Body of pancreas (tissue), 4 donors: ENCODE measurements at regions of chr3 and their contacts with region 1.

Region 1: GRCh38 chr3:149969940-149970715 is 567 bp downstream of the PFN2 start:
- DNase-seq: peak; percentile 85 to 88 (median 86)
- ATAC-seq: peak; percentile 77
- H3K4me3 ChIP-seq: peak overlapping the region; percentile 45 to 51
- H3K27ac ChIP-seq: peak overlapping the region; percentile 59 to 85 (median 79)
- H3K4me1 ChIP-seq: peaks cover 28% of the 10 kb centered on the region
- H3K27me3 ChIP-seq: no peaks in the 10 kb centered on the region
- CTCF ChIP-seq: no peak
- POLR2A ChIP-seq: peak in 2 of 3 donors; percentile 12 to 30

Region 2: DNA sequence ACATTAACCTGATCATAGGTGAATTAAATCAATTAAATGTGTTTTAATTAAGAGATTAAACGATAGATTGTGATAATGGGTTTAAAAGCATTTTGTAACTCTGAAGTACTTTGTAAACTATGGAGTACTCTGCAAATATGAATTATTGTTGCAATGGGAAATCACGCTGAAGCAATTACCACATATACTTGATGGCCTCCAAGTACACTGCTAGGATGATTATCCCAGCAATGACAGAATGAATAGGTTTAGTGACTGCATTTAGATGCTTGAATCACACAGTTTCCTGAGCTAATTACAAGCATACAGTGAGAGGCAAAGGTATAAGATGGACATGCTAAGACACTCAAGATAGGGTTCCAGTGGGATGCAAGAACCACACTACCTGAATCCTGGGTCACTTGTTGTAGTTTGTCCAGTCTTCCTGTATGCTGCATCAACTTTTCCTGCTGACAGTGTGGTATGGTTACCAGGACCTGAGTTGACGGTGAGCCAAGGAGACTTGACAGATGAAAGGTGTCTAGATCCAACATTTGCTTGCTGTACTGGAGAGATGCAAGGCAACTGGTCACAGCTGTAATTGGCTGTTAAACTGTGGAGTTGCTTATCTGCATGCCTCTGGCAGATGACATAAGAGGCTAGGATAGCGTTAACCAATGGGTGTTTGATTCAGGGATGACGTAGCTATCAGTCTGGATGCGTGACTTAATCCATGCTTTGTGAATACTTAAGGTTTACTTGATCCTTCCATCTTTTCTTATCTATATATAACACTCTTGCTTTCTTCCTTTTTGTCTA is 119.1 kb before region 1 on chr3:
- intact Hi-C with region 1: no loop called
- DNase-seq: no peak
- ATAC-seq: no peak
- H3K4me3 ChIP-seq: no peak overlapping the region
- H3K27ac ChIP-seq: no peak overlapping the region
- H3K4me1 ChIP-seq: peaks cover 6% of the 10 kb centered on the region
- H3K27me3 ChIP-seq: no peaks in the 10 kb centered on the region
- CTCF ChIP-seq: no peak
- POLR2A ChIP-seq: no peak

Region 3: DNA sequence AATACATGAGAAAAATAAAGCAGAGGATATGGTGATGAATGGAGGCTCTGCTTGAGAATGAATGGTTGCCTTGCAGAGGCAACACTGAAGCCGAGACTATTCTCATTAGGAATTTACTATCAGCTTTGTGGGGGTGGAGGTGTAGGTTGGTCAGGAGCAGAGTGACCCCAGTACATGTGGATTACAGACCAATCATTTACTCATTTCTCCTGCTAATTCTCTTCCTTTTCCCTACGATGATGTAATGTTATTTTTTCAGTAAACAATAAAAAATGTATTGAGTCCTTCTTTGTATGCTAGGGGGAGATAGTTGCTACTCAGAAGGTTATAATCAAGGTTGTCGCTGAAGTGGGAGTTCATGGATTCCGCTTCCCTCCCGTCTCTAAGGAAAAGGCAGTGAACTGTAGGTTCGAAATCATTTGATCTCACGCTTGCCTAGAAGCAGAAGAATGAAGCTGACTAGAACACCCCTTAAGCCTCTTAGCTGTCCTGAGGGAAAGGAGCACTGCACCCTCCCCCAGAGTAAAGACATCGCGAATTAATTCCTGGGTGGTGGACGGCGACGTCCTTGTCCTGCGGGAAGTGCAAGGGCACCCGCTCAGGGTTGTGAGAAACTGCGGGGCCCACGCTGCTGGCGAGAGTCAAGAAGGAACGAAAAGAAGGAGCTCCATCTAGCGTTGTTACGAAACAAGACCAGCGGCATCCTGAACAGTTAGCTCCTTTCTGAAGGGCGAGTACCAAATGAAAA is 213.7 kb after region 1 on chr3:
- intact Hi-C with region 1: loop called (anchors 5 kb)
- DNase-seq: peak; percentile 68 to 78 (median 76)
- ATAC-seq: peak; percentile 86
- H3K4me3 ChIP-seq: no peak overlapping the region
- H3K27ac ChIP-seq: peak overlapping the region in 2 of 4 donors; percentile 7 to 39
- H3K4me1 ChIP-seq: peaks cover 34% of the 10 kb centered on the region
- H3K27me3 ChIP-seq: no peaks in the 10 kb centered on the region
- CTCF ChIP-seq: peak; percentile 36 to 73 (median 65)
- POLR2A ChIP-seq: no peak

Region 4: DNA sequence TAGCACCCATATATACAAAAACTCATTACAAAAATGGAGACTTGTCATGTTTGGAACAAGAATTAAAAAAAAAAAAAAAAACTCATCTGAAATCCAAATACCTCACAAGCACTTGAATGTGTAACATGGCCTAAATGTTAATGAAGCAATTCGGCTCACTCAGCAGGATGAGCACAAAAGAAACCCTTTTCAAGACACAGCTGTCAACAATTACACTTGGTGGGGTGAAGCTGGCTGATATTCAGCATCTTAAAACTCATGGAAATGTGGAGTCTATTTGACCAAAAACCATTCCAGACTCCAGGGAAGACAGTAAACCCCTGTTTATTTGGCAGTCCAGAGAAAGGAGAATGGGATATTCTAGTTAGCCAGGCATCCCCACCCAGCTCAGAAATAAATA is 232.6 kb after region 1 on chr3:
- intact Hi-C with region 1: loop called (anchors 10 kb)
- DNase-seq: no peak
- ATAC-seq: no peak
- H3K4me3 ChIP-seq: no peak overlapping the region
- H3K27ac ChIP-seq: no peak overlapping the region
- H3K4me1 ChIP-seq: no peaks in the 10 kb centered on the region
- H3K27me3 ChIP-seq: no peaks in the 10 kb centered on the region
- CTCF ChIP-seq: no peak
- POLR2A ChIP-seq: no peak